Dorsolateral prefrontal cortex (tissue), 120 donors: ENCODE measurements at regions of chr22 and their contacts with region 1.

Region 1: DNA sequence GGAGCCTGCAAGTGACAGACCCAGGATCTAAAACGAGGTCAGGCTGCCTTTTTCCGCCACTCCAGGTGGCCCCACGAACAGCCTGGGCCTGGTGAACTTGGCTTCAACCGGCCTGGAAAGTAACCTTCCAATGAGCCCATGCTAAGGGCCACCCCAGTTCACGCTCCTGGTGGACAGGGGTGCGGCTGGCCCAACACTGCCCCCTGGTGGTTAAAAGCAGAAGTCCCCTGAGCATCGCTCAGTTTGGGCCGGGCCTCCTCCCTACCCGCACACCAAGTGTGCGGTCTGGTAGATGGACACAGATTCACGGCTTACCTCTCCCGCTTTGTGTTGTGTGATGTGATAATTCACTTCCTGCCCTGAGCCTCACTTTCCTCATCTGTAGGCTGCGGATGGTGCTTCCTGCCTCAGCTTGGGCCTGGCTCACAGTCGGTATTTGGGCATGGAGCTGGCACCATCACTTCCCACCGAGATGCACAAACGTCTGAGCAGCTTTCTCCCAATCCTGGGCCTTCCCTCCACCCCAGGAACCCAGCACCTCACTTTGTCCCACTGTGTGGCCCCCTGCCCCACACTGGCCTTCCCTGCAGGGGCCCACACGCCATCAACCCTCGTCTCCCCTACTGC is 13.7 kb upstream of the SEC14L3 start:
- DNase-seq: peak; percentile 41 to 80 (median 55)
- H3K4me3 ChIP-seq: no peak overlapping the region
- H3K27ac ChIP-seq: no peak overlapping the region
- H3K27me3 ChIP-seq: no peaks in the 10 kb centered on the region
- CTCF ChIP-seq: peak; percentile 90 to 100 (median 98)

Region 2: DNA sequence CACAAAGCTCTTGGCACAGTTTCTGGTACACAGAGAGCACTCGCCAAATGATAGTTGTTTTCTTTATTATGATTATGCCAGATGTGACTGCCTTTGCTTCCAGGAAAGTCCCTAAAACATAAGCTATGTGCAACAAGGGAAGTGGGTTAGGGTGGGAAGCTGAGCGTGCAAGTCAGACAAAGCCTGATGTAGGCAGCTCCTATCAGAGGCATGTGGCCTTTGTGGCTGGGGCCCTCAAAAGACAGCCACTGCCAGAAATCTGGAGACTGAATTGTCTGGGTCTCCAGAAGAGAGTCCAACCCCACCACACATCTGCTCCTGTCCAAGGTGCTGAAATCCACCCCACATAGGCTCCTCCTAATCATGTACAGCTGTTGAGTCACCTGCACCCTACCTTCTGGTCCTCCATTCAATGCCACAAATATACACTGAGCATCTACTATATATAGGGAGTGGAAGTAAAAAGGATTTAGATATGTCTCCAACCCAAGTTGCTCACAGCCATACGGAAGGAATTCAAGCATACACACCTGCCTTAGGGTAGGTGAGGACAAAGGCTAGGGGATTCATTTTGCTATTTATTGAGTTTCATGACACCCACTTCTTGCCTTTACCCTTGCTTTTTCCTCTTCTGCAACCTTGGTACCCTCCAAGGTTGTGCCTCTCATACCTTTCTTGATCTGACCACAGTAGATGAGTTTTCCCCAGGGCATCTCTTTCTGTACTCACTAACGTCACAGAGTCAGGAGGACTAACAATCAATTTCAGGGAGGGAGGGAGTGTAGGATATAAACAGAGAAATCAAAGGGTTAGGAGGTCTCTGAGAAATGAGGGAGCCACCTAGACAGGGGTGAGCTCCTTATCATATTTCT is 26.1 kb before region 1 on chr22:
- intact Hi-C with region 1: no loop called
- DNase-seq: no peak
- H3K4me3 ChIP-seq: no peak overlapping the region
- H3K27ac ChIP-seq: no peak overlapping the region
- H3K27me3 ChIP-seq: no peaks in the 10 kb centered on the region
- CTCF ChIP-seq: no peak

Region 3: DNA sequence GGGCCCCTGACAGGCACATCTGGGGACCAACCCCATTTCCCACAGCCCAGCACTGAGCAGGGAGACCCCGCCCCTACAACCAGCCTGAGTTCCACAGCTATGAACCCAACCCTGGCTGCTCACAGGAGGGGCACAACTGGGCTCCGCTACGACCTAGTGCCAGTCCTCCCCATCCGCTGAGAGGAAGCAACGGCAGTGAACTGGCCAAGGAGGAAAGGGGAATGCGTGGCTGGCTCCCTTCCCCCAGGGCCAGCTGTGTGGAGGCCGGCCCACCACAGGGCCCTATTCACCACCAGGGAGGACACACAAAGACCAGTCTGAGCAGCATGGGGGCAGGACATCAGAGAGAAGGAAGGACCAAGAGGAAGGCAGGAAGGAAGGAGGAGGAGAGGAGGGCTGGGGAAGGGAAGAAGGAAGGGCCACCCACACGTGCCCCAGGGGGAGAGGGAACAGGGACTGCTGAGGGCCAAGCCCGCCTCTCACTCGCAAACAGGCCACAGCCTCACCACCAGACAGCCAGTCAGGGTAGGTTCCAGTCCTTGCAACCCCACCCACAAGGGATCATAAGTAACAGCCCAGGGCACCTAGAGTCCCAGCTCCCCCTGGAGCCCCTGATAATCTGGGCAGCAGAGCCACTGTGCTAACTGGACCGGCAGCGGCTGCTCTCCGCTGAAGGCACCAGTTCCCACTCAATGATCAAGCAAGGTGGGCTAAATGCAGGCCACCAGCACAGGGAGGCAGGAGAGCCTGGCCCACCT is 97.5 kb after region 1 on chr22:
- intact Hi-C with region 1: loop called in 1 of 2 experiments (anchors 10 kb)
- DNase-seq: peak in 7 of 10 donors; percentile 40 to 68 (median 49)
- H3K4me3 ChIP-seq: peak overlapping the region in 3 of 59 donors; percentile 1 to 24 (median 23)
- H3K27ac ChIP-seq: peak overlapping the region in 58 of 59 donors; percentile 23 to 91 (median 78)
- H3K27me3 ChIP-seq: no peaks in the 10 kb centered on the region
- CTCF ChIP-seq: peak in 2 of 56 donors; percentile 14